Activated CD8-positive, alpha-beta memory T cell treated with anti-CD3 and anti-CD28 coated beads, Interleukin-2, amount 10 ng/mL, durations not matched to agents 7 days and 5 days (primary cell): ENCODE measurements at regions of chr11 and their contacts with region 1.

Region 1: GRCh38 chr11:118206391-118207031 is 18.3 kb downstream of the JAML start:
- DNase-seq: no peak
- ATAC-seq: no peak
- H3K4me3 Mint-ChIP-seq: peak overlapping the region; percentile 13
- H3K27ac Mint-ChIP-seq: peak overlapping the region; percentile 85
- H3K4me1 Mint-ChIP-seq: peaks cover 56% of the 10 kb centered on the region
- H3K27me3 Mint-ChIP-seq: no peaks in the 10 kb centered on the region

Region 2: DNA sequence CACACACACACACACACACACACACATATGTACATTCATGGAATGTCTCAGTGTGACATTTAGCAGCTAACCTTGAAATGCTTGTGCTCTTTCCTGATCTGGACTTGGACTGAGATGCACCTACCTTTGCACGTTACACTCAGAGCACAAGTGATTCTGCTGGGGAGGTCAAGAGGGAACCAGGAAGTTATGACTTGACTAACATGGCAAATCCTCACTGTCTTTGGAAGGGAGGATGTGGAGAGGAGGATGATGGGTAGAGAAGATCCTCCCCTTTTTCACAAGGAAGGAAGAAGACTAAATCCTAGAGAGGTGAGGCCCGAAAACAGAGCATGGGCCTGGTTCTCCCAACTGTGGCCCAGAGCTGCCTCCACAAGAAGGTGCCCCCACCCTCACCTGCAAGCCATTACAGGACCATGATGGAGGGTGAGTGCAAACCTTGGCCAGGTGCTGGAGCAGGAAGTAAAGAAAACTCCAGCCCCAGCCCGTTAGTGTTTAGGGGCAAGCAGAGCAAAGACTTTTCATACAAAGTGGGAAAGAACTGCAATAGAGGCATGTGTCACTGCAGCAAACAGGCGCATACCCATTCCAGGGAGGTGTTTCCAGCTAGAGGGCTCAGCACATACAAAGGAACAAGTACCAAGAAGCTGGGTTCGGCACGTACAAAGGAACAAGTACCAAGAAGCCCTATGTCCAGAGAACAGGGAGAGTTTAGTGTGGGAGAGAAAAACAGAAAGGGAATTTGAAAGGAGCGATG is 80.3 kb before region 1 on chr11:
- CTCF ChIA-PET with region 1: no interaction called
- DNase-seq: no peak
- ATAC-seq: peak; percentile 51
- H3K4me3 Mint-ChIP-seq: no peak overlapping the region
- H3K27ac Mint-ChIP-seq: peak overlapping the region; percentile 18
- H3K4me1 Mint-ChIP-seq: peaks cover 11% of the 10 kb centered on the region
- H3K27me3 Mint-ChIP-seq: peaks cover 15% of the 10 kb centered on the region

Region 3: DNA sequence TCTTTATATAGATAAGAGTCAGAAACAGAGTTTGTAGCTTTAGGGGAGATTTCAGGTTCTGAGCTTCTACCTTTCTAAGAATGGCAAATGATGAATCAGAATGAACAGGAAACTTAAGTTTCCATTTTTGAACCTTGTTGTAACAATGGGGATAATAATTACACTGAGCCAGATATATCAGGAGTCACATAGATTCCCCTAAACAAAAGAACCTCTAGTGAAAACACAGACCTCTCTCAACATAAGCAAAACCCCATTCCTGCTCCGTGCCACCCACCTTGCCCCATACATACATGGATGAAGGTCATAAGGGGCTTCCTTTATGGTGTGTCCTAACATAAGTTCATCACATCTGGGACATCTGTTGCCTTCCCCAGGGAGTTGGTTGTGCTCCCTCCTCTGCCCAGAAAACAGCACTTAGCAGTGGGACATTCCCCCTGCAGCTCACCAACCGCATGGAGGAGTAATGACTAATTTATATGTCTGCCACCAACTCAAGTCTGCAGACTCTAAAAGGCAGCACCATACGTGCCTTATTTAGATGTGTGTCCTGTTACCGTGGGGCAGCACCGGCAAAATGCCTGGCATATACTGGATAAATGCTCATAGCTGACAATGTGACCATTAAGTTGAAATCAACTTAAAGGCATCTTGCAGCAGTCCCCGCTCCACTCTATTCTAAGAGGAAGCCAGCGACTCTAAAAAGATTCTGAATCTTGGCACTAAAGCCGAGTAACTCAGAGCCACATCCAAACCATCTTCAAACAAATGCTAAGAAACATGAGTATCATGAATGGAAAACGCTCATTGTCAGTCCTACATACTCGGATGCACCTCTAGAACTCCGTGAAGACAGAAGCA is 10.3 kb after region 1 on chr11:
- CTCF ChIA-PET with region 1: interaction called, 21 read pairs
- DNase-seq: peak; percentile 75
- ATAC-seq: peak; percentile 67
- H3K4me3 Mint-ChIP-seq: peak overlapping the region; percentile 79
- H3K27ac Mint-ChIP-seq: peak overlapping the region; percentile 98
- H3K4me1 Mint-ChIP-seq: peaks cover 97% of the 10 kb centered on the region
- H3K27me3 Mint-ChIP-seq: no peaks in the 10 kb centered on the region